ENCODE measurements at regions of chr20 and their contacts with region 1.

Region 1: DNA sequence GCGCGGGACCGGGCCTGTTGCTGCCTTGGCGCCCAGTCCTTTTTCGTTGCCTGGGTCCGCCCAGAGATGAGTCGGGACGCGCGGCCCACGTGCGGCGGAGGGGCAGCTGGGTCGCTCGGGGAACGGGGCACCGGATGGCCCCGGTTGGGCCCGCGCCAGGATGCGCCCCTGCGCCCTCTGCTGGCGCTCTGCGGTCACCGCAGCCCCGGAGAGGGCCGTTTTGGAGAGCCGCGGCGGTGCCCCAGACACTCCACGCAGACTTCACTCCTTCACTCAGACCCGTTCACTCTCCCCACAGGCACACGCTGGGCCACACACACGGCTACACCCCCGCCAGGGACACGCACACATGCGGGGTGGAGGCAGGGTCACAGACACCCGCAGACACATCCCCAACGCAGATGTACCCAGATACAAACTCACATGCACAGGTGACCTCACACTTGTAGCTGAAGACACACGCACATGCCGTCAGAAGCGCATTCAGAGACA is 38.8 kb downstream of the SRC start:
- DNase-seq: peak; percentile 82 to 90 (median 86)
- ATAC-seq: peak; percentile 88
- H3K4me3 ChIP-seq: peak overlapping the region; percentile 47
- H3K27ac ChIP-seq: peak overlapping the region; percentile 78
- H3K4me1 ChIP-seq: peaks cover 22 to 67% of the 10 kb centered on the region in 2 experiments
- H3K27me3 ChIP-seq: no peaks in the 10 kb centered on the region
- CTCF ChIP-seq: peak; percentile 83 to 86 (median 84)
- EP300 ChIP-seq: no peak
- POLR2A ChIP-seq: no peak; the same call in 1 of the 2 replicates
- RAD21 ChIP-seq: peak; percentile 81 to 82

Region 2: DNA sequence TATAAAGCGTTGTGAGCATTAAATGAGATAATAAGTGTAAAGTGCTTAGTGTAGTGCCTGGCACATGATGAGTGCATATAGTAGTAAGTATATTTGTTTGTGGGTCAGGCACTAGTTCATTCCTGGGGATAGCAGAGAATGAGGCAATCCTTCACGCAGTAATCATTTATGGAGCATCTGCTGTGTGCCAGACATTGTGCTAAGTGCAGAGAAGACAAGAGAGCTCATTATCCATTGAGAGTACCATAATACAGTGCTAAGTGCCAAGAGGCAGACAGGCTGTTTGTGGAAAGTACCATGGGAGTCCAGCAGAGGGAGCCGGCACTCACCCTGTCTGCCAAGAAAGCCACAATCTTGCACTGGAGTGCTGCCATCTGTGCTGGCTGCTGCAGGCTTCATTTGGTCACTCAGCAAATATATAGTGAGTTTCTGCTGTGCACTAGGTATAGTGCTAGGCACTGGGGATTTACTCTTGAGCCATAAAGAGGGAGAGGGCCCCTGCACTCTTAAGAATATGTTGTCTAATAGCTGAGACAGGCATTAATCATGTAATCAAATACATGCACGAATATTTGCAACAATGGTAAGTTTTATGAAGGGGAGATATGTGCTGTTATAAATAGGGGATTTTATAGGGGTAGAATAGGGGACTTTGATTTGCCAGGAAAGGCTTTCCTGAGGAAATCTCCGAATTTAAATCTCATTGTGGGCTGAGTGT is 192.4 kb before region 1 on chr20:
- CTCF ChIA-PET with region 1: interaction called, 4 read pairs
- POLR2A ChIA-PET with region 1: no interaction called
- in situ Hi-C with region 1: no loop called
- intact Hi-C with region 1: loop called (anchors 5 kb)
- DNase-seq: peak; percentile 73 to 82 (median 78)
- ATAC-seq: peak; percentile 94
- H3K4me3 ChIP-seq: no peak overlapping the region
- H3K27ac ChIP-seq: no peak overlapping the region
- H3K4me1 ChIP-seq: peaks cover 0 to 2% of the 10 kb centered on the region in 2 experiments; a peak in 1 of 5 replicates
- H3K27me3 ChIP-seq: no peaks in the 10 kb centered on the region
- CTCF ChIP-seq: peak; percentile 86 to 93 (median 88)
- EP300 ChIP-seq: no peak
- POLR2A ChIP-seq: no peak
- RAD21 ChIP-seq: peak; percentile 37 to 49; a peak in 3 of 4 replicates

Region 3: DNA sequence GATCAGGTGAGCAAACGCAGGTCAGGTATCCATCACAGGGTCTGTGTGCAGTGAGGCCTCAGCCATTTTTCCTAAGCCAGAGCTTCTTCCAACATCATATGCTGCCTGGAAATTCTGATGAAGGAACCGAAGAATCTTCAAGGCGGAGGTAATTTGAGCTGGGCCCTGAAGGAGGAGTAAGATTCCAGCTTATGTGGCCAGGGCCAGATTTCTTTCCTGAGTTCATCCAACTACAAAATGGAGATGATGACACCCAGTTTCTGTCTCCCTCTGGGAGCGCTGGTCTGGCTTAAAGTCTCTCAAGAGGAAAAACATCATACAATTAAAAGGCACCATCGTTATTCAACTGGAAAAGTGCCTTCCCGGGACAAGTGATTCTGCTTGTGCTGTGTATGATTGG is 102.2 kb before region 1 on chr20:
- CTCF ChIA-PET with region 1: interaction called, 19 read pairs
- POLR2A ChIA-PET with region 1: interaction called, 4 read pairs
- in situ Hi-C with region 1: loop called (anchors 5 kb)
- intact Hi-C with region 1: loop called (anchors 5 kb)
- DNase-seq: peak in 1 of 4 experiments; percentile 36
- ATAC-seq: peak; percentile 64
- H3K4me3 ChIP-seq: no peak overlapping the region
- H3K27ac ChIP-seq: no peak overlapping the region
- H3K4me1 ChIP-seq: no peaks in the 10 kb centered on the region; a peak in 2 of 5 replicates
- H3K27me3 ChIP-seq: no peaks in the 10 kb centered on the region; a peak in 1 of 5 replicates
- CTCF ChIP-seq: peak; percentile 56 to 76 (median 59)
- EP300 ChIP-seq: no peak
- POLR2A ChIP-seq: no peak
- RAD21 ChIP-seq: peak; percentile 54 to 78

Region 4: GRCh38 chr20:37288091-37288490 is 96.6 kb before region 1 on chr20:
- CTCF ChIA-PET with region 1: interaction called, 19 read pairs
- POLR2A ChIA-PET with region 1: interaction called, 4 read pairs
- in situ Hi-C with region 1: loop called (anchors 5 kb)
- intact Hi-C with region 1: loop called (anchors 5 kb)
- DNase-seq: peak in 1 of 4 experiments; percentile 36
- ATAC-seq: no peak
- H3K4me3 ChIP-seq: no peak overlapping the region
- H3K27ac ChIP-seq: no peak overlapping the region; the same call in 2 of the 3 replicates
- H3K4me1 ChIP-seq: peaks cover 5 to 17% of the 10 kb centered on the region in 2 experiments
- H3K27me3 ChIP-seq: no peaks in the 10 kb centered on the region
- CTCF ChIP-seq: no peak
- EP300 ChIP-seq: no peak
- POLR2A ChIP-seq: no peak
- RAD21 ChIP-seq: no peak

Region 5: GRCh38 chr20:37693635-37694626 is 309.2 kb after region 1 on chr20 and contains the start of gene CTNNBL1:
- CTCF ChIA-PET with region 1: no interaction called
- POLR2A ChIA-PET with region 1: no interaction called
- in situ Hi-C with region 1: no loop called
- intact Hi-C with region 1: no loop called
- DNase-seq: peak; percentile 96 to 98 (median 98)
- ATAC-seq: peak; percentile 97
- H3K4me3 ChIP-seq: peak within 1 kb of the TSS; percentile 80
- H3K27ac ChIP-seq: peak within 1 kb of the TSS; percentile 14; the same call in 2 of the 3 replicates
- H3K4me1 ChIP-seq: peaks cover 2 to 4% of the 10 kb centered on the region in 2 experiments; a peak in 1 of 5 replicates
- H3K27me3 ChIP-seq: peaks cover 0 to 8% of the 10 kb centered on the region in 2 experiments; a peak in 2 of 5 replicates
- CTCF ChIP-seq: no peak
- EP300 ChIP-seq: no peak
- POLR2A ChIP-seq: peak; percentile 71
- RAD21 ChIP-seq: no peak
- polyA plus RNA-seq, gene CTNNBL1: 43.6 to 85.6 TPM

Measured in K562 (cell line).